ENCODE measurements at regions of chr18 and their contacts with region 1.

Region 1: GRCh38 chr18:24488824-24489493 is 28.5 kb downstream of the HRH4 start:
- DNase-seq: peak; percentile 16
- H3K4me3 ChIP-seq: no peak overlapping the region
- H3K27ac ChIP-seq: no peak overlapping the region
- H3K4me1 ChIP-seq: no peaks in the 10 kb centered on the region
- H3K27me3 ChIP-seq: peaks cover 2% of the 10 kb centered on the region
- CTCF ChIP-seq: peak; percentile 66 to 83

Region 2: GRCh38 chr18:24176727-24177416 is 312.1 kb before region 1 on chr18:
- CTCF ChIA-PET with region 1: interaction called, 3 read pairs
- dilution Hi-C with region 1: no loop called
- in situ Hi-C with region 1: no loop called
- intact Hi-C with region 1: loop called (anchors 1 kb)
- DNase-seq: peak; percentile 27
- H3K4me3 ChIP-seq: no peak overlapping the region
- H3K27ac ChIP-seq: no peak overlapping the region
- H3K4me1 ChIP-seq: peaks cover 9% of the 10 kb centered on the region
- H3K27me3 ChIP-seq: no peaks in the 10 kb centered on the region
- CTCF ChIP-seq: peak; percentile 62 to 91

Region 3: GRCh38 chr18:24369426-24369825 is 119.5 kb before region 1 on chr18:
- CTCF ChIA-PET with region 1: interaction called, 6 read pairs
- dilution Hi-C with region 1: no loop called
- in situ Hi-C with region 1: loop called in 1 of 2 experiments (anchors 10 kb)
- intact Hi-C with region 1: no loop called
- DNase-seq: no peak
- H3K4me3 ChIP-seq: no peak overlapping the region
- H3K27ac ChIP-seq: no peak overlapping the region
- H3K4me1 ChIP-seq: no peaks in the 10 kb centered on the region
- H3K27me3 ChIP-seq: no peaks in the 10 kb centered on the region
- CTCF ChIP-seq: no peak

Region 4: GRCh38 chr18:24726727-24727492 is 238.0 kb after region 1 on chr18:
- CTCF ChIA-PET with region 1: interaction called, 8 read pairs
- dilution Hi-C with region 1: no loop called
- in situ Hi-C with region 1: no loop called
- intact Hi-C with region 1: loop called (anchors 1 kb)
- DNase-seq: peak; percentile 61
- H3K4me3 ChIP-seq: no peak overlapping the region
- H3K27ac ChIP-seq: no peak overlapping the region
- H3K4me1 ChIP-seq: peaks cover 17% of the 10 kb centered on the region
- H3K27me3 ChIP-seq: peaks cover 2% of the 10 kb centered on the region
- CTCF ChIP-seq: peak; percentile 74 to 85

Region 5: GRCh38 chr18:25005541-25006403 is 516.8 kb after region 1 on chr18:
- CTCF ChIA-PET with region 1: interaction called, 18 read pairs
- dilution Hi-C with region 1: no loop called
- in situ Hi-C with region 1: no loop called
- intact Hi-C with region 1: no loop called
- DNase-seq: peak; percentile 25
- H3K4me3 ChIP-seq: no peak overlapping the region
- H3K27ac ChIP-seq: peak overlapping the region; percentile 6
- H3K4me1 ChIP-seq: peaks cover 4% of the 10 kb centered on the region
- H3K27me3 ChIP-seq: no peaks in the 10 kb centered on the region
- CTCF ChIP-seq: no peak

Measured in mammary epithelial cell (primary cell).